CD4-positive, alpha-beta T cell (primary cell): ENCODE measurements at regions of chr15 and their contacts with region 1.

Region 1: DNA sequence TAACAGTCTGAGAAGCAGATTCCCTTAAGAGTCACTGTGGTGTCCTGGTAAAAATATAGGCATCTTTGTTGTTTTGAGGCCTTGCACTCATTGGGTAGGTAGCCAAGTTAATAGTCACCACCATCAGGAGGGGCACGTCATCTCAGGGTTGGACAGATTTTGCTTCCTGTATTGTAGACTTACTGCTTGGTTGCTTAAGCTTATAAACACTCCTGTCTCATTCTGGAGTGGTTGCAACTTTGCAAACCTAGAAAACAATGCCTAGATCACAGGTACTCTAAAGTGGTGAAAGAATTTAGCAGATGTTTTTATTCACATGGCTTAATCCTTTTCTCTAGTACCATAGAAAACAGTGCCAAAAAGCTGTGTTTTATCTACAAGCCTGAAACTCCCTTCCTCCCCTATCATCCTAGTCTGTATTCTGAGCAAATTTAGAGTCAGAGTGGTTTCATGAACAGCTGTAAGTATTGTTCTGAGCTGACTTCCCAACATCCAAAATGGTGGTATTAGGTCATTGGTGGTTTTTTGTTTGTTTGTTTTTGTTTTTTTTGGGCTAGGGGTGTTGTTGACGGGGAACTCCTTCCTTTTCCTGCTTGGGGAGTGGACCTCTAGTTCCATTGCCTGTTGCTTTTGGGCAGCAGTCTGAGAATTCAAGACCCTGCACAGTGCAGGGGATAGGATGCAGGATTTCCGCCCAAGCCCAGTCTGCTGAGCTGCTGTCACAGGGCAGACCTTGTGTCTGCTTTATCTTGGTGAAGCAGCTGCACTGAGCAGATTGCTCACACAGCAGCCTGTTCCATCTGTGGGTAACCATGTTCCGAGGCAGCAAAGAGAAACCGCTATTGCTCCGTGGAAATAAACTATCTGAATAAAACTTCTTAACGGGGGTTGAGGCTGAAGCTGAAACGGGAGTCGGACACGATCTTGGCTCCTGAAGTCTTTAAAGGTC is 202.0 kb downstream of the AKAP13 start:
- DNase-seq: peak; percentile 43 to 84 (median 66)
- ATAC-seq: peak; percentile 71
- H3K4me3 ChIP-seq: peak overlapping the region; percentile 62
- H3K4me3 Mint-ChIP-seq: peak overlapping the region; percentile 87
- H3K27ac ChIP-seq: peak overlapping the region; percentile 86 to 96
- H3K27ac Mint-ChIP-seq: peak overlapping the region; percentile 100
- H3K4me1 ChIP-seq: peaks cover 64% of the 10 kb centered on the region
- H3K4me1 Mint-ChIP-seq: peaks cover 79% of the 10 kb centered on the region
- H3K27me3 ChIP-seq: no peaks in the 10 kb centered on the region
- H3K27me3 Mint-ChIP-seq: no peaks in the 10 kb centered on the region
- CTCF ChIP-seq: no peak

Region 2: DNA sequence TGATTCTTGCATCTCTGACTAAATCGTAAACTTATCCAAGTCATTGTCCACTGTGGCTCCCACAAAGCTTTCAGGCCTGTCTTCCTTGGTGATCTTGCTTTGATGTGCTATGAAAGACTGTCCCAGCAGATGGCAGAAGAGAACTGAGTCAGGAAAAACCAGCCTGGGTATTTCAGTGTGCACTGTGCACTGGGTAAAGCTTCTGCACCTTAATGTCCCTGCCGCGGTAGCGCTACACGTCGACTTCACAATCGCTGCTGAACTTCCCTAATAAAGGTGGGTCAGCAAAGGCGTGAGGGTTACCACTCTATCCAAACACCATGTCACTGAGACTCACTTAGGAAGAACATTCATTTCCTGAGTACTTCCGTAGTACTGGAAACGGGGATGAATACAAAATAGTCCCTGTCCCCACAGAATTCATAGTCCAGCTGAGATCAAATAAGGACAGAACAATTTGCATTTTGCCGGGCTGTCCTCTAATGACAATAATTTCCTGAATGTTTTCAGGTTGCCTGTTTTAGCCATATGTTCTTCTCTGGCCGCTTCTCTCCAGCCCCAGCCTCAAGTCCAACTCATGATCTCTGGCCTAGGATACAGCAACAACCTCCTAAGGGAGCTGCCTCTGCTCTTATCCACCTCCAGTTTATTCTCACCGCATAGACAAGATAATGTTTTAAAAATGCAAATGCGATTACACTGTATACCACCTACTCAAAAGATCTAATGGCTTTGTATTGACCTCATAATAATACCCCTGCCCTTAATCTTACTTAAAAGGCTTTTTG is 285.6 kb before region 1 on chr15:
- CTCF ChIA-PET with region 1: interaction called, 3 read pairs
- POLR2A ChIA-PET with region 1: no interaction called
- intact Hi-C with region 1: loop called in 1 of 2 experiments (anchors 10 kb)
- DNase-seq: peak; percentile 44 to 86 (median 58)
- ATAC-seq: peak; percentile 99
- H3K4me3 ChIP-seq: no peak overlapping the region
- H3K4me3 Mint-ChIP-seq: peak overlapping the region; percentile 14
- H3K27ac ChIP-seq: no peak overlapping the region
- H3K27ac Mint-ChIP-seq: no peak overlapping the region
- H3K4me1 ChIP-seq: peaks cover 6% of the 10 kb centered on the region
- H3K4me1 Mint-ChIP-seq: peaks cover 13% of the 10 kb centered on the region
- H3K27me3 ChIP-seq: no peaks in the 10 kb centered on the region
- H3K27me3 Mint-ChIP-seq: no peaks in the 10 kb centered on the region
- CTCF ChIP-seq: peak; percentile 74

Region 3: DNA sequence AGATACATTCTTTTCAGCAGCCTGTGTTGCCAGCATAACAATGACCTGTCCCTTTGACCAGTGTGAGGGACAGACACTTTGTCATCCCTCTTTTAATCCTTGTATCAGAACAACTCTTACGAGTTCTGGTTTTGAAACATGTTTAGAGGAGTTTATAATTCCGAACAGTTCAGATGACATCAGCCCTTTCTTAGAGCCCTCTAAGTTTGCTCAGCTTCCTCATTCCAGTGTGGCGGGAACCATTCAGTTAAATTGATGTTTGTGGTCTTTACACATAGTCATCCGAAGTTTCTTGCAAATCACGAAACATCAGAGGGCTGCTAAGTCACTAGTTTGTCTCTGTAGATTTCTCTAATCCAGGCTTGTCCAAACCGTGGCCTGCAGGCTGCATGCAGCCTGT is 99.5 kb before region 1 on chr15:
- CTCF ChIA-PET with region 1: no interaction called
- POLR2A ChIA-PET with region 1: no interaction called
- intact Hi-C with region 1: no loop called
- DNase-seq: no peak
- ATAC-seq: no peak
- H3K4me3 ChIP-seq: no peak overlapping the region
- H3K4me3 Mint-ChIP-seq: no peak overlapping the region
- H3K27ac ChIP-seq: no peak overlapping the region
- H3K27ac Mint-ChIP-seq: no peak overlapping the region
- H3K4me1 ChIP-seq: peaks cover 14% of the 10 kb centered on the region
- H3K4me1 Mint-ChIP-seq: peaks cover 69% of the 10 kb centered on the region
- H3K27me3 ChIP-seq: no peaks in the 10 kb centered on the region
- H3K27me3 Mint-ChIP-seq: no peaks in the 10 kb centered on the region
- CTCF ChIP-seq: no peak

Region 4: DNA sequence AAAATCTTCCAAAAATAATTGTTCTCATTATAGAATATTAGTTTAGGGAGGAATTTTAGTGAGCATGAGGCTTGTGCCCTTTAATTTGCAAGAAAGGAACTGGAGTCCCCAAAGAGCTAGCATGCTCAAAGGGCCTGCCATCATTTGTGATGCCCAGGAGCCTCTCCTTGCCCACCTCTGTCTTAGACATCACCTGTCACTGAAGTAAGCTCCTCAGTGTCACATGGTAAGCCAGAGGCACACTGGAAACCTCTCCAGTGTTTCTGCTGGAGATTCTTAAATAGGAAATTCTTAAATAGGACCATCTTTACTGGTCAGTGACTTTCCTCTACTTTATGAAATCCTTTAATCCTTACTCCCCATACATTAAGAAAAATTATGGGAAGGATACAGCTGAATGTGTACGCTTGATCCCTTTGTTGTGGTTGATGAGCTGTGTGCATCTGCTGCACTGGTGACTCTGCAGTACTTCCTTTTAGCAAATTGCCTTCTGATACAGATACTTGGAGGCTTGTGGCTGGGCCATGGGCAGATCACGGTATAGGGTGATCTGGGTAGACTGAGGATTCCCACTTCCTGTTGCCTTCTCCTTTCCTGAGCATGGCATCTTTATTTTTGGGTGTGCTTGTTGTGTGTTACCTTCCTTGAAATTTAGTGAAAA is 14.9 kb after region 1 on chr15:
- CTCF ChIA-PET with region 1: no interaction called
- POLR2A ChIA-PET with region 1: interaction called, 8 read pairs
- intact Hi-C with region 1: loop called in 1 of 2 experiments (anchors 2 kb)
- DNase-seq: peak in 5 of 14 experiments; percentile 17 to 67 (median 64)
- ATAC-seq: peak; percentile 91
- H3K4me3 ChIP-seq: no peak overlapping the region
- H3K4me3 Mint-ChIP-seq: peak overlapping the region; percentile 0
- H3K27ac ChIP-seq: no peak overlapping the region
- H3K27ac Mint-ChIP-seq: peak overlapping the region; percentile 54
- H3K4me1 ChIP-seq: peaks cover 21% of the 10 kb centered on the region
- H3K4me1 Mint-ChIP-seq: peaks cover 68% of the 10 kb centered on the region
- H3K27me3 ChIP-seq: no peaks in the 10 kb centered on the region
- H3K27me3 Mint-ChIP-seq: no peaks in the 10 kb centered on the region
- CTCF ChIP-seq: no peak

Region 5: DNA sequence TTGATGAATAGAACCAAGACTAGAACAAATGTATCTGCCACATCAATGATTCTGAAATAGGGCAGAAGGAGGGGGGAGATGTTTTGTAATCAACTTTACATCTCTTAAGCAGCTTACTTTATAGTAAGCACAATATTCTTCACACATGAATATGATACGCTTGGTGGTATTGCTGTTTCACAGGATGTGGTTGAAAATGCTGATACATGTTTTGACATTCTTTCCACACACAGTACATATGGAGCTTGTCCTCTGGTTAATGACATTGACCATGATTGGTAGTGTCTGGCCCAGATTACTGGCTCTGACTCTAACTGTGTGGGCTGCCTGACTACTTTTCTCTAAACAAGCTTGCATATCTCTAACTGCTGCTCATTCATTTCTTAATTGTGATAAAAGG is 43.5 kb after region 1 on chr15:
- CTCF ChIA-PET with region 1: no interaction called
- POLR2A ChIA-PET with region 1: interaction called, 20 read pairs
- intact Hi-C with region 1: loop called in 1 of 2 experiments (anchors 2 kb)
- DNase-seq: peak in 4 of 14 experiments; percentile 27 to 84 (median 68)
- ATAC-seq: peak; percentile 75
- H3K4me3 ChIP-seq: no peak overlapping the region
- H3K4me3 Mint-ChIP-seq: peak overlapping the region; percentile 49
- H3K27ac ChIP-seq: peak overlapping the region; percentile 5 to 25
- H3K27ac Mint-ChIP-seq: peak overlapping the region; percentile 79
- H3K4me1 ChIP-seq: peaks cover 36% of the 10 kb centered on the region
- H3K4me1 Mint-ChIP-seq: peaks cover 81% of the 10 kb centered on the region
- H3K27me3 ChIP-seq: no peaks in the 10 kb centered on the region
- H3K27me3 Mint-ChIP-seq: no peaks in the 10 kb centered on the region
- CTCF ChIP-seq: no peak

Region 6: DNA sequence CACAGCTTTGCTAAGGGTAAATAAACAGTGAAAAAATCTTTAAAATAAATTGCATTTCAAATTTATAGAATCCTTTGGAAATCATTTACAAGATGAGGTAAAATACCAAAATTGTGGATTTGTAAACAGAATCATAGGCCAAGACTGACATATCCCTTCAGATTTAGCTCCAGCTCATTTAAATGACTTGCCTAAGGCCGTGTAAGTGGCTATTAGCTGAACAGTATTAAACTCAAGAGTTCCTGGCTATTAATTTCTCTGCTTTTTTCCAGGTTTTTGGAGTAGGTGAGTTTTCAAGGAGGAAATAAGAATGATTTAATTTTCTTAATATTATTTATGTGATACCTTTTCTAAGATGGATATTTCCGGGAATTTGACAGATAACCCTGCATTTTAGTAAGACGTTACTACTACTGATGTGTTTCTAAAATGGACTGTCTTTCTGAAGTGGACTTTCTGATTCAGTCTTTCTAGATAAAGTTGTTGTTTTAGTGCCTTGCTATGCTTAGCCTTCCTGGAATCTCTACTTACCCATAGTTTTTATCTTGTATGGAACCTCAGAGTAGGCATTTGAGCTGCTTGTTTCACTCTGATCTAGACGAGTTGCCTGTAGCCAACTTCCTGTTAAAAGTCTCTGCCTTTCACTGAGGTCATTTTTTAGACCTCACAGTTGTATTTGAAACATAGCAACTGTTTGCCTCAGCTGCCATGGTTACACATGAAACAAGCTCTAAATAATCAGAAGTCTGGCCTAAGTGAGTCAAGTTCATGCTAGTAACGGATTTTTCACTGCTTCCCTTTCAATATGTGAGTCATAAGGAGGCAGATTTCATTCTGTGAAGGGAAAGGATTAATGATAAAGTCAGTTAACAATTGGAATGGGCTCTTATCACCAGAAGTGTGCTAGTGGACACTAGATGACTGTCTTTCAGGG is 85.4 kb after region 1 on chr15:
- CTCF ChIA-PET with region 1: no interaction called
- POLR2A ChIA-PET with region 1: interaction called, 5 read pairs
- intact Hi-C with region 1: loop called in 1 of 2 experiments (anchors 1 kb)
- DNase-seq: peak in 11 of 14 experiments; percentile 15 to 95 (median 46)
- ATAC-seq: peak; percentile 94
- H3K4me3 ChIP-seq: no peak overlapping the region
- H3K4me3 Mint-ChIP-seq: peak overlapping the region; percentile 57
- H3K27ac ChIP-seq: peak overlapping the region; percentile 68 to 95
- H3K27ac Mint-ChIP-seq: peak overlapping the region; percentile 84
- H3K4me1 ChIP-seq: peaks cover 9% of the 10 kb centered on the region
- H3K4me1 Mint-ChIP-seq: peaks cover 22% of the 10 kb centered on the region
- H3K27me3 ChIP-seq: no peaks in the 10 kb centered on the region
- H3K27me3 Mint-ChIP-seq: no peaks in the 10 kb centered on the region
- CTCF ChIP-seq: no peak

Region 7: DNA sequence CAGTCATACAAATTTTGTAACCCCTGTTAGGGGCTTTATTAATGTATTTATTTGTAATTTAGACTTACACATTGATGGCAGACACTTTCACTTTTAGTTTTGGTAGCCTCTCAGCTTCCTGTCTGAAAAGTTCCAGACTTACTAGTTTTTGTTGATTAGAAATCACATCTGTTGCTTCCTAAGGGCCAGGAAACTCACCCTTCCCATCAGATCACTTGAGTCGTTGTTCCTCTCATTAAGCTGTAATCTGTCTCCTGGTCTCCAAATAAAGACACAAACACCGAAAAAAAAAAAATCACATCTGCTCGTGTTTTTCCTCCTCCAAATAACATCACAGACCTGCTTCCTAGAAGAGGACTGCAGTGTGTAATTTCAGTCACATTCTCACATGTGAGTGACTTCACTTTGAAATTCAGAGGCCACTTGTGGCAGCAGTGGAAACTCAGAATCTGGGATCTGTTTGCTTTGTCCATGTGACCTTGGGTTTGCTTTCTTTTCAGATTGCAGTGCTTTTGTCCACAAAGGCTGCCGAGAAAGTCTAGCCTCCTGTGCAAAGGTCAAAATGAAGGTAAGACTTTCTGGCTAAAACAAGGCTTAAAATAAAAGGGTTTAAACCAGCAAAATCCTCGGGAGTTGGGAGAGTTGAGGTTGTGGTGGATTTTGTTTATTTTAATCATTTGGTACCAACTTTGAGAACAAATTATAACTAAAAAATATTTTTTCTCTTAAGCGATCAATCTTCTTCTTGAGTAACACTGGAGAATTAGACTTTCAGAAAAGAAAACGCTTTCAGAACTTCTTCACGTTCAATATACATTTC is 125.3 kb after region 1 on chr15:
- CTCF ChIA-PET with region 1: no interaction called
- POLR2A ChIA-PET with region 1: interaction called, 6 read pairs
- intact Hi-C with region 1: loop called in 1 of 2 experiments (anchors 1 kb)
- DNase-seq: peak in 2 of 14 experiments; percentile 56 to 80
- ATAC-seq: peak; percentile 39
- H3K4me3 ChIP-seq: peak overlapping the region; percentile 45
- H3K4me3 Mint-ChIP-seq: peak overlapping the region; percentile 75
- H3K27ac ChIP-seq: peak overlapping the region; percentile 80 to 88
- H3K27ac Mint-ChIP-seq: peak overlapping the region; percentile 98
- H3K4me1 ChIP-seq: peaks cover 54% of the 10 kb centered on the region
- H3K4me1 Mint-ChIP-seq: peaks cover 87% of the 10 kb centered on the region
- H3K27me3 ChIP-seq: no peaks in the 10 kb centered on the region
- H3K27me3 Mint-ChIP-seq: no peaks in the 10 kb centered on the region
- CTCF ChIP-seq: no peak